ENCODE measurements at regions of chr19 and their contacts with region 1.

Region 1: GRCh38 chr19:1113033-1113985 is 9.5 kb downstream of the GPX4 start:
- DNase-seq: peak; percentile 100
- H3K4me3 ChIP-seq: no peak overlapping the region; a peak in 1 of 4 replicates
- H3K27ac ChIP-seq: peak overlapping the region; percentile 32 to 79; a peak in 3 of 4 replicates
- H3K4me1 ChIP-seq: peaks cover 5 to 7% of the 10 kb centered on the region in 2 experiments; a peak in 2 of 4 replicates
- H3K27me3 ChIP-seq: no peaks in the 10 kb centered on the region
- CTCF ChIP-seq: peak; percentile 84
- EP300 ChIP-seq: no peak
- RAD21 ChIP-seq: peak; percentile 78

Region 2: GRCh38 chr19:1082172-1082927 is 31.0 kb before region 1 on chr19:
- CTCF ChIA-PET with region 1: interaction called, 11 read pairs
- POLR2A ChIA-PET with region 1: no interaction called
- DNase-seq: peak; percentile 92
- H3K4me3 ChIP-seq: peak overlapping the region; percentile 45 to 47
- H3K27ac ChIP-seq: no peak overlapping the region
- H3K4me1 ChIP-seq: peaks cover 0 to 22% of the 10 kb centered on the region in 2 experiments; a peak in 2 of 4 replicates
- H3K27me3 ChIP-seq: no peaks in the 10 kb centered on the region
- CTCF ChIP-seq: no peak
- EP300 ChIP-seq: no peak
- RAD21 ChIP-seq: no peak

Region 3: GRCh38 chr19:1167671-1168571 is 54.6 kb after region 1 on chr19:
- CTCF ChIA-PET with region 1: interaction called, 10 read pairs
- POLR2A ChIA-PET with region 1: no interaction called
- DNase-seq: no peak
- H3K4me3 ChIP-seq: no peak overlapping the region
- H3K27ac ChIP-seq: peak overlapping the region in 1 of 2 experiments; percentile 69; a peak in 1 of 4 replicates
- H3K4me1 ChIP-seq: peaks cover 27 to 31% of the 10 kb centered on the region in 2 experiments; a peak in 3 of 4 replicates
- H3K27me3 ChIP-seq: no peaks in the 10 kb centered on the region
- CTCF ChIP-seq: no peak
- EP300 ChIP-seq: no peak
- RAD21 ChIP-seq: no peak

Region 4: DNA sequence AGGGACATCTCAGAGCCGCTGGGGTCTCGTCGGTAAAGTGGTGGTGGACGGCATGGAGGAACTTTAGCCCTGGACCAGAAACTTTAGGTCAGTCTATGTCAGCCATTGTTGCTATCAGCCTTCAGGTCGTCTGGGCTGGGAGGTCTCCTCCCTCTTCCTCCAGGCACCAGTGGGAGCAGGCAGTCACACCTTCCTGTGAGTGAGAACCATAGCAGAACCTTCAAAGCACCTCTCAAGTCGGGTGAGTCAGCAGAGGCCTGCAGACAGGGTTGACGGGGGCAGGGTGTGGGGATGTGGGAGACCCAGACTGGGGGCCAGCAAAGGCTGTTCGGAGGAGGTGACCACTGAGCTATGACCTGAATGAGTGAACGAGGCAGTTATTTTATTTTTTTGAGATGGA is 76.1 kb after region 1 on chr19:
- CTCF ChIA-PET with region 1: interaction called, 63 read pairs
- POLR2A ChIA-PET with region 1: interaction called, 9 read pairs
- DNase-seq: no peak
- H3K4me3 ChIP-seq: no peak overlapping the region
- H3K27ac ChIP-seq: no peak overlapping the region
- H3K4me1 ChIP-seq: no peaks in the 10 kb centered on the region
- H3K27me3 ChIP-seq: no peaks in the 10 kb centered on the region
- CTCF ChIP-seq: no peak
- EP300 ChIP-seq: no peak
- RAD21 ChIP-seq: no peak

Region 5: DNA sequence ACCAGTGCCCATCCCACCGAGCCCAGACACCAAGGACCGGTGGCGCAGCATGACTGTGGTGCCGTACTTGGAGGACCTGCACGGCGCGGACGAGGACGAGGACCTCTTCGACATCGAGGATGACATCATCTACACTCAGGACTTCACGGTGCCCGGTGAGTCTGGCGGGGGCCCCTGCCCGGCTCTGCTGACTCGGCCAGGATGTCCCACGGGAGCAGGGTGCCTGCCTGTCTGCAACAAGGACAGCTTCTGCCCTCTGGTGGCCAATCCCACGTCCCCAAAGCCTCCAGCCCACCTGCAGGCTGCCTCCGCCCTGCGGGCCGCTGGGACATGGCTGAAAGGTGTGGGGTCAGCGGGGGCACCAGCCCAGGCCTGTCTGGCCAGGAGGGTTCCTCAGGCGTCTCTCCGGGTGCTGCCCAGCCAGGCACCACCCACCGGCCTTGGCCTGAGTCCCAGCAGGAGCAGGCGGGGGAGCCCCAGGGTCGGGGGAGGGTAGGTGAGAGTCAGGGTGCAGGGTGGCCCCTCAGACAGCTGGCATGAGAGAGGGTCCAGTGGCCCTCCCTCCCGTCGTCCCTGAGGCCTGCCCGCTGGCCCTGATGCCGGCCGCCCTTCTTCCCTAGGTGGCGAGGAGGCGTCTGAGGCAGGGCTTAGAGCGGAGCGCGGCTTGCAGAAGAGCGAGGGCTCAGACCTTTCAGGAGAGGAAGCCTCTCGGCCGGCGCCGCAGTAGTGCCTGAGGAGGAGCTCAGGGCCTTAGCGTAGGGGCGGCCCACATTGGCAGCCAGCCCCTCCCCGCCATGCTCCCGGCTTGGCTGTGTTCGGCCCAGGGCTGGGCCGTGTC is 109.9 kb after region 1 on chr19:
- CTCF ChIA-PET with region 1: interaction called, 36 read pairs
- POLR2A ChIA-PET with region 1: no interaction called
- DNase-seq: peak; percentile 76
- H3K4me3 ChIP-seq: no peak overlapping the region; a peak in 1 of 4 replicates
- H3K27ac ChIP-seq: no peak overlapping the region; a peak in 1 of 4 replicates
- H3K4me1 ChIP-seq: peaks cover 0 to 5% of the 10 kb centered on the region in 2 experiments; a peak in 1 of 4 replicates
- H3K27me3 ChIP-seq: no peaks in the 10 kb centered on the region
- CTCF ChIP-seq: peak; percentile 61
- EP300 ChIP-seq: no peak
- RAD21 ChIP-seq: peak; percentile 39; the same call in 1 of the 2 replicates